ENCODE measurements at regions of chr1 and their contacts with region 1.

Region 1: DNA sequence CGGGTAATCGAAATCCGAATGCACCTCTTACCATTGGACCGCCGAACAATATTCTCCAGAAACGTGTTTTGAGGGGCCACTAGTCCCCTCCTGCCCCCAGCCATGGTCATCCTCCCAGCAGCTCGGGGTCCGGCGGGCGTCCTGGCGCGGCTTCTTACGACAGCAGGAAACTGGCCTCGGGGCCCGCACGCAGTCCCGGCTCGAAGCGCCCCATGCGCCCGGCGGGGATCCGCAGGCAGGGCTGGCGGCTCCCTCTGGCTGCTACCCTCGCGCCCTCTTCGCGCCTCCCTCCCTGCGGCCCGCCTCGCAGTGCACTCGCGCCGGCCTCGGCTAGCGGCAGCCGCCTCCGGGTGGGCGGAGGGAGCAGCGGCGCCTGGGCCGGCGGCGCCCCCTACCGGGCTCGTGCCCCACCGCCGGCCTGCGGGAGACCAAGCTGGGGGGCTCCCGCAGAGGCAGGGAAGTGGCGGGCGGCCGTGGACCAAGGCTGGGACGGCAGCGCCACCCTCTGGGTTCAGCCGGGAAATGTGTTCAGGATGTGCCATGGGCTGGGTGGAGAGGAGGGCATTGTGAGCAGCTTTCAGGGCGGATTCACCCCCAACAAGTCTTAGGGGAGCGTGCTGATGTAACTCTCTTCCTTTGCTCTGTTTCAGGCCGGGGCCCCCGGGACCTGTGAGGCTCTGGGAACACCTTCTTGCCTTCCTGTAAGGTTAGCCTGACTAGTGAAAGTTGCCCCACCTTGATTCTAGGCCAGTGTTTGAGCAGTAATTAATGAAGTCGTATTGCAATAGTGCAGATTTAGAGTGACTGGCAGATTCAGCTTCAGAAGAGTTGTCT is at the start of gene KCNH1:
- DNase-seq: no peak
- H3K4me3 ChIP-seq: peak within 1 kb of the TSS; percentile 66
- CTCF ChIP-seq: peak; percentile 83

Region 2: GRCh38 chr1:210373885-210374599 is 760.0 kb before region 1 on chr1:
- CTCF ChIA-PET with region 1: interaction called, 43 read pairs
- POLR2A ChIA-PET with region 1: interaction called, 9 read pairs
- DNase-seq: peak; percentile 89
- H3K4me3 ChIP-seq: no peak overlapping the region
- CTCF ChIP-seq: peak; percentile 81

Region 3: GRCh38 chr1:210438928-210439809 is 694.9 kb before region 1 on chr1:
- CTCF ChIA-PET with region 1: interaction called, 40 read pairs
- POLR2A ChIA-PET with region 1: no interaction called
- DNase-seq: peak; percentile 100
- H3K4me3 ChIP-seq: no peak overlapping the region
- CTCF ChIP-seq: no peak

Region 4: DNA sequence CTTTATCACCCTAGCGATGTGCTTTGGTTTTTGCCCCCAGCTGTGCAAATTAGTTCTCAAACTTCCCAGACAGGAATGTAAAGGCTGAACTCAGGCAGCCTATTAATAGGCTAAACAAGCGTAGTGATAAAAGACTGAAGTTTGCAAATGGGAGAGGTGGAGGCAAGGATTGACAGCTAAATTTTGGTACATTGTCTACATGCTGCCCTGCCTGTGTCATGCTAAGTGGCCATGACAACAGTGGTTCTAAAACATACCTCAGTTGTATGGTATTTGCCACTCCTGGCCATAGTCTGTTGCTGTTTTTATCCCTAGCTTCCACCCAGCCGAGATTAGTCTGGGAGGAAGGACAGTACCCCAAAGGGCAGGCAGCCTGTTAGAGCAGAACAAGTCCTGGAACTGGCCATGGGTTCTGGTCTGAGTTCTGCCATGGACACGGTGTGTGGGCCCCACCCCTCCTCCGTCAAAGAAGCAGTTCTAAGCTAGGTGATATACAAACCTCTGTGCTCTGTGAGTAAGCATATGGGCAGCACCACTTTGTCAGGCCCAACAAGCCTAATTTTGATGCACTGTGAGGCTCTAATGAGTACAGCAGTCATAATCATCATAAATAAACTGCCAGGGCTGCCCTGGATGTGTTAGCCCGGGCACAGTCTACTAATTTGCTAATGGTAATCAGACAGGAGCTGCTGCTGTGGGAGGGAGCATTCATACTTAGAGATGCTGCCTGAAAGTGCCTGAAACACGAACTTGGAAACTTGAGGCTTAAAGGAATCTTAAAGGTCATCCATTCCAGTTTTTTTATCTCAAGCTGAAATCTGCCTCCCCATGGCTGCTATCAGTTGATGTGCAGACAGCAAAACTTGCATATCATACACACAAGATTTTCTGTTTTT is 628.2 kb before region 1 on chr1:
- CTCF ChIA-PET with region 1: interaction called, 10 read pairs
- POLR2A ChIA-PET with region 1: no interaction called
- DNase-seq: no peak
- H3K4me3 ChIP-seq: no peak overlapping the region
- CTCF ChIP-seq: no peak

Region 5: DNA sequence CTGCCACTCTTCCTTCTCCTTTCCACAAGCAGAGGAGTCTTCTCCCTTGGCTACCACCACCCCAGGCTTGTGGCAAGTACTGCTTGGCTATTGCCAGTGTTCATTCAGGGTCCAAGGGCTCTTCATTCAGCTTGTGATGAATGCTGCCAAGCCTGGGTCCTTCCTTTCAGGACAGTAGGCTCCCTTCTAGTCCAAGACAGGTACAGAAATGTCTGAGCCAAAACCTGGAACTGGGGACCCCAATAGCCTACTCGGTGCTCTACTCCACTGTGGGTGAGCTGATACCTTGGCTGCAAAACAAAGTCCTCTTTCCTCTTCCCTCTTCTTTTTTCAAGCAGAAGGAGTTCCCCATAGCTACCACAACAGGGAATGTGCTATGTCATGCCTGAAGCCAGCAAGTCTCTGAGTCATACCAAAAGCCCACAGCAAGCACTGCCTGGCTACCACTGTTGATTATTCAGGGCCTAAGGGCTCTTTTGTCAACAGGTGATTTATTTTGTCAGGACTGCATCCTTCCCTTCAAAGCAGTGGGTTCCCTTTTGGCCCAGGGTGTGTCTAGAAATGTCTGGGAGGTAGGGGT is 536.4 kb before region 1 on chr1:
- CTCF ChIA-PET with region 1: interaction called, 363 read pairs
- POLR2A ChIA-PET with region 1: interaction called, 4 read pairs
- DNase-seq: peak; percentile 86
- H3K4me3 ChIP-seq: no peak overlapping the region
- CTCF ChIP-seq: no peak

Region 6: DNA sequence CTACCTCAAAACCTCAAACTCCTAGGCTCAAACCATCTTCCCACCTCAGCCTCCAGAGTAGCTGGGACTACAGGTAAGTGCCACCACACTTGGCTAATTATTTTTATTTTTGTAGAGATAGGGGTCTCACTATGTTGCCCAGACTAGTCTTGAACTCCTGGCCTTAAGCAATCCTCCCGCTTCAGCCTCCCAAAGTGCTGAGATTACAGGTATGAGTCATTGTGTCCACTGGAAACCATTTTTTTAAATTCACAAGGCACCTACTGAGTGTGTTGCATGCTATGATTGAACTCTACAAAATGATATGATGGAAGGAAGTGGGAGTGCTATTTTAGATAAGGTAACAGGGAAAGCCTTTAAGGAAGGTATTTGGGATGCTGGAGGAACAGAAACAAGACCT is 83.3 kb after region 1 on chr1:
- CTCF ChIA-PET with region 1: no interaction called
- POLR2A ChIA-PET with region 1: no interaction called
- DNase-seq: no peak
- H3K4me3 ChIP-seq: no peak overlapping the region
- CTCF ChIP-seq: no peak

Measured in AG04449 (cell line).